Psoas muscle (tissue), 8 donors: ENCODE measurements at regions of chr22 and their contacts with region 1.

Region 1: DNA sequence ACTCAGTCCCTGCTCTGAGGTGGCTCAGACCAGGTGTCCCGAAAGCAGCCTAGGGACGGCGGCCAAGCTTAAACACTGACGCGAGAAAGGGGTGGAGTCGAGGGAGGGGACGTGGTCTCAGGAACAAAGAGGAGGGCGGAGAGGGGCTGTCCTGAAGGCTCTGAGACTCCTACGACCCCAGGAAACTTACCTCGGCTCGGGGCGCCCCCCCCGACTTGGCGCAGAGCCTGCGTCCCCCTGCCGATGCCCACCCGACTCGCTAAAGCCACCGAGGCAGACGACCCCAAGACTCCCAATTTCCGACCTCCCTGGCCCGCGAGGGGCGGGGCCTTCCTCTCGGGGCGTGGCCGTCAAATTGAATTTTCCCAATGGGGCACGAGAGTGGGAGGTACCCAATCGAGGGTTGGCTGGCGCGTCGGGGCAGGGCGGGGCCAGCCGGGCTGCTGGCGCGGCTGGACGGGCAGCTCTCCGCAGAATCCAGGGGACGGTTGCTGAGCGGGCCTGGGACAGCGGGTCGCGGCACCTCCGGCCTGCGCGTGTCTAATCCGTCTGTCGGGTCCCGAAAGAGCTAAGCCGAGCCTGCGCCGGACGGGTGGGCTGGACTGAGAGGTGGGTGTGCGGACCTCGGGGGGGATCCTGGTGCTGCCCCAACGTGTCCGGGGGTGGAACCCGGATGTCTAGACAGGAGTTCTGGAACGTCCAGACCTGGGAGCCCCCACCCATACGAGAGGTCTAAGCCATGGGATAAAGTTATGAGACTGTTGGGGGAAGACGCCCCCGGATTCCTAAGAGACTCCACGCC is at the start of gene SMTN:
- DNase-seq: peak; percentile 92 to 95
- ATAC-seq: peak; percentile 80 to 85 (median 82)
- H3K4me3 ChIP-seq: peak within 1 kb of the TSS; percentile 89
- H3K27ac ChIP-seq: peak within 1 kb of the TSS; percentile 94
- H3K4me1 ChIP-seq: peaks cover 27% of the 10 kb centered on the region
- H3K27me3 ChIP-seq: no peaks in the 10 kb centered on the region
- CTCF ChIP-seq: no peak
- total RNA-seq, gene SMTN: 33.6 to 79.3 (median 66.5) TPM

Region 2: DNA sequence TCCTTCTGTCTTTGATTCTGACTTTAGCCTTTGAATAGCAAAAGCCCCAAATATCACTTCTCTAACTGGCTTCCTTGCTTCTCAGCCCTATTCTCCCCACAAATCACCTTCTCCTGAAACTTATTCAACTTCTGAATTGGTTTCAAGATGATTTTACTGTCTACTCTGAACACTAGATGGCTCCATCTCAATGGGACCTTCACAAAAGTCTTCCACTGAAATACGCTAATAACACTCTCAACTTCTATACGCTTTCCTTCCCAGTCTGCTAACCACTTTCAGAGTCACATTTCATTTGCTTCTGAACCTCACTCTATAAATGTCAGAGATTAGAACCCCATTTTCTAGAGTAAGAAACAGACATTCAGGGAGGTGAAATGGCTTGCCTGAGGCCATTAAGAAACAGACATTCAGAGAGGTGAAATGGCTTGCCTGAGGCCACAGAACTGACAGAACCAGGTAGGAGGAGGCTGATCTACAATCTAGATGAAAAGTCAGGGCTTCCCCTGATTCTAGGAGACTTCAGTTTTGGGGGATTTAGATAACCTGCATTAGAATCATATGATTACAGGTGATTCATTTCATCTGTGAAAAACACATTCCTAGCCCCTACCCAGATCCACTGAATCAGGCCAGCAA is 133.1 kb before region 1 on chr22:
- intact Hi-C with region 1: loop called (anchors 2 to 5 kb)
- DNase-seq: no peak
- ATAC-seq: peak; percentile 53 to 73 (median 64)
- H3K4me3 ChIP-seq: no peak overlapping the region
- H3K27ac ChIP-seq: no peak overlapping the region
- H3K4me1 ChIP-seq: peaks cover 8% of the 10 kb centered on the region
- H3K27me3 ChIP-seq: no peaks in the 10 kb centered on the region
- CTCF ChIP-seq: peak; percentile 59

Region 3: DNA sequence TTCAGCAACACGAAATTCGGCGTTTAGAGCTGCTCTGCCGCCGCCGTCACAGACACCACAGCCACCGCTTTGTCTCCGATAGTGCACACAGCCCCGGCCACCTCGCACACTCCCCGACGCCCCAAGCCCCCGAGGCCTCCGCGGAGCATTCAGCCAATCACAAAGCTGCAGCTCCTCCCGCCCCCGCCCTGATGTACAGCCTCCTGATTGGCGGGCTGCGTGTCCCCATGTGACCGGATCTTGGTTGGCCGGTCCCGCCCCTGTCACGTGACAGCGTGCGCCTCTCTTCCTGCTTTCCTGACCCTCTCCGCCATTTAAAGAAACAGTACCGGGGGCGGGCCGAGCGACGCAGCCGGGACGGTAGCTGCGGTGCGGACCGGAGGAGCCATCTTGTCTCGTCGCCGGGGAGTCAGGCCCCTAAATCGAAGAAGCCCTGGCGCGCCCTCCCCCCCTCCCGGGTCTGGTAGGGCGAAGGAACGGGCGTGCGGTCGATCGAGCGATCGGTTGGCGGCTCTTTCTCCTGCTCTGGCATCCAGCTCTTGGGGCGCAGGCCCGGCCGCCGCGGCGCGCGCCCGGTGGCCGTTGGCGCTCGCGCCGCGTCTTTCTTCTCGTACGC is 112.0 kb before region 1 on chr22 and contains the start of gene TUG1:
- intact Hi-C with region 1: loop called (anchors 2 kb)
- DNase-seq: peak; percentile 99
- ATAC-seq: peak; percentile 96 to 98 (median 98)
- H3K4me3 ChIP-seq: peak within 1 kb of the TSS; percentile 86
- H3K27ac ChIP-seq: peak within 1 kb of the TSS; percentile 94
- H3K4me1 ChIP-seq: peaks cover 45% of the 10 kb centered on the region
- H3K27me3 ChIP-seq: no peaks in the 10 kb centered on the region
- CTCF ChIP-seq: no peak
- total RNA-seq, gene TUG1: 22.2 to 30.7 (median 28.5) TPM

Region 4: DNA sequence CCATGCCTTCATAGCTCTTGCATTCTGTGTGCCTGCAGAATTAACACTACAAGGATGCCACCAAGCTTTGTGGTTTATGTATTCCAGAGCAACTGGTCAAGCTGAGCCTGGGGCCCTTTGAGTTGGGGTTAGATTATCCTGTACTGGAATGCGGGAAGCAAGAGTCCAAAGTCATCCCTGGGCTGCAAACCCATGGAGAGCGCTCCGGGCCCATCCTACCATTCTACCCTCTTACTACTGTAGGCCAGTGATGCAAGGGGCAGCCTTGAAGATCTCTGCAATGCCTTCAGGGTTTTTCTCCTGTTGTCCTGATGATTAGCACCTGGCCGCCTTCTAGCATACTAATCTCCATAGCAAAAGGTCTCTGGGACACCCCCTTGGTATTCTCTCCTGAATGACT is 60.7 kb before region 1 on chr22:
- intact Hi-C with region 1: no loop called
- DNase-seq: no peak
- ATAC-seq: no peak
- H3K4me3 ChIP-seq: no peak overlapping the region
- H3K27ac ChIP-seq: no peak overlapping the region
- H3K4me1 ChIP-seq: no peaks in the 10 kb centered on the region
- H3K27me3 ChIP-seq: no peaks in the 10 kb centered on the region
- CTCF ChIP-seq: no peak

Region 5: DNA sequence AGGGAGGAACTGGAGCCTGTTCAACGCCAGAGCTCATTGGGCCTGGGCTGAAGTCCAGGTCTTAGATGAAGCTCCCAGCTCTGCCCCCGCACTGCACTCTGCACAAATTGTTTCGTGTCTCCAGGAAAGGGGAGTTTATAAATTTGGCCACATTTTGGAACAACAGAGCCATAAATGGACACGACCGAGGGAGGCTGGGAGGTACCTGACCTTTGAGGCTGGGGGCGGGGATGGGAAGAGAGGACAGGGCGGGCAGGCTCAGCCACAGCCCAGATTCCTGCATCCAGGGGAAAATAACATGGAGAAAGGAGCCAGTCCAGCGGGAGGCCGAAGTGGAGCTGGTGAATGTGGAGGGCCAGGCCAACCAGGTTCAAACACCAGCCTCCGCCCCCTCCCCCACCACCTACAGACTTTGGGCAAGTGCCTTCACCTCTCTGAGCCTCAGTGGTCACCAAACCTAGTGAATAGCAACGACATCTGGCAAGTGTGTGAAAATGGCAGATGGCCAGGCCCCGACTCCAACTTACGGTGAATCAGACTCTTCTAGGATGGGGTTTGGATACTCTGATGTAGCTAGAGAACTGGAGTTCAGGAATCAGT is 36.7 kb before region 1 on chr22:
- intact Hi-C with region 1: loop called in 1 of 2 experiments (anchors 2 kb)
- DNase-seq: peak; percentile 68 to 69
- ATAC-seq: peak in 2 of 4 donors; percentile 31 to 37
- H3K4me3 ChIP-seq: no peak overlapping the region
- H3K27ac ChIP-seq: peak overlapping the region; percentile 65
- H3K4me1 ChIP-seq: no peaks in the 10 kb centered on the region
- H3K27me3 ChIP-seq: no peaks in the 10 kb centered on the region
- CTCF ChIP-seq: no peak